ENCODE measurements at regions of chr18 and their contacts with region 1.

Region 1: DNA sequence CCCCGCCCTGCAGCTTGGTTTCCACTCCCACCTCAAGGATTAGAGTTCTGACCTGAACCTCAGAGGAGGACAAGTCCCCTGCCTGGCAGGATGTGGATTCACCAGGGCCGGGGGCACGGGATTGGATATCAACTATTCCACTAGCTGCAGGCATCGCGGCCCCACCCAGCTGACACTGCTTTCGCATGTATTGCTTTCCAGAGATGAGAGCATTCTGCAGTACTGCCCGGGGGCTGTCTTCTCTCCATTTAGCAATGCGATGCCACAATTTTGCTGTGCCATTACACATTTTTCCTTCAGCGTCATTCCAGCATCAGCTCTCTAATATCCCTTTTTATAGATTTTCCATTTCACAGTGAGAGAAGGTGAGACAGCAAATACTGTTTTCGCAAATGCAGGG is 42.0 kb downstream of the CTIF start:
- DNase-seq: no peak
- H3K4me3 ChIP-seq: no peak overlapping the region
- H3K27ac ChIP-seq: no peak overlapping the region
- H3K4me1 ChIP-seq: peaks cover 0 to 7% of the 10 kb centered on the region in 2 donors
- H3K27me3 ChIP-seq: no peaks in the 10 kb centered on the region
- CTCF ChIP-seq: no peak
- POLR2A ChIP-seq: no peak

Region 2: GRCh38 chr18:48374423-48375149 is 206.2 kb before region 1 on chr18:
- intact Hi-C with region 1: loop called (anchors 5 kb)
- DNase-seq: no peak
- H3K4me3 ChIP-seq: no peak overlapping the region
- H3K27ac ChIP-seq: no peak overlapping the region
- H3K4me1 ChIP-seq: no peaks in the 10 kb centered on the region
- H3K27me3 ChIP-seq: no peaks in the 10 kb centered on the region
- CTCF ChIP-seq: no peak
- POLR2A ChIP-seq: no peak

Region 3: DNA sequence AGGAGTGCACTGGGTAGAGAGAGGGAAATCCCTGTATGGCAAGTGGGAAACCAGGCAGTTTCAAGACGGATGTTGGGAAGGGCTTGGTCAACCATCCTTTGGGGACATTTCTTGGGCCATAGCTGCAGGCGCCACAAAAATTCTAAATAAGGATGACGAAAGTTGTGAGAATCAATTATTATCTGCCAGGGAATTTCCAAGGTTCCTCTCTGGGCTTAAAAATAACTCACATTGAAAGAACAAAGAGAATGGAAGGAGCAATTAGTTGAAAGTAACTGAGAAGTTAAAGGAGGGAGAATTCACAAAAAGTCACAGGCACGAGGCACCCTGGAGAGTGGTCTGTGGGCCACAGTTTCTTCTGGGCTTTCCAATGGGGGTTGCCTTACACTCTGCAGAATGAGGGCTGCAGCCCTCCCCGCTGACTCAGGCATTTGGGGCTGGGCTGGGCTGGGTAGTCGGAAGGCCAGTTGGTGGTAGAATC is 174.3 kb after region 1 on chr18:
- intact Hi-C with region 1: no loop called
- DNase-seq: no peak
- H3K4me3 ChIP-seq: no peak overlapping the region
- H3K27ac ChIP-seq: no peak overlapping the region
- H3K4me1 ChIP-seq: peaks cover 0 to 4% of the 10 kb centered on the region in 2 donors
- H3K27me3 ChIP-seq: no peaks in the 10 kb centered on the region
- CTCF ChIP-seq: no peak
- POLR2A ChIP-seq: no peak

Measured in uterus (tissue), 4 donors.